ENCODE measurements at regions of chr1 and their contacts with region 1.

Region 1: DNA sequence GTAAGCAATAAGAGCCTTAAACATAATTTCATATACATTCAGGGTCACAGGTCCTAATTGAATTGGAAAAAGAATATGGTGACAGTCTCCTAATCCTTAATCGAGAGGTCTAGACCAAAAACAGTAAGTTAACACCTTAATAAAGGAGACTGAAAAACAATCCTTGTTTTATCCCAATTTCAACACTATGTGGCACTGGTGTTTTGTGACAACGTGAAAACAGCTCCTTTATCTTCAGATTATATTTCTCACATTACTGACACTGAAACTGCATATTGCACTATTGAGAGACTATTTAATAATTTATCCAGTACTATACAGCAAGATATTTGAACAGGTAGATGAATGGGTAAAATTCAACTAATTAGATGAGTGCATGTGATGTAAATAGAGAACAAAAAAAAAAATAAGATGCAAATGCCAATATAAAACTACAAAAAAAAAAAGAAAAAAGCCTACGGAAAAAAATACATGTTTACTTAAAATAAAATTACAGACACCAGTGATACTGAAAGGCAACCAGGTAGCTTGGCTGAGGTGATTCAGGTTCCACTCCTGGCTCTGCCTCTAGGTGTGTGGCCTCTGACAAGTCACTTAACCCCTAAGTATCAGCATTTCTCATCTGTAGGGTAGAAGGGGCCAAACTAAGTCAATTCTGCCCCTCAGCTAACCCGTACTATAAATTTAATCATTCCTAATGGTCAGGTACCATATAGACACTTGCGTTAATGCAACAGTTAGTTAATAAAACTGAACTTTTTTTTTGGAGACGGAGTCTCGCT is 33.9 kb downstream of the TP53BP2 start:
- H3K4me3 Mint-ChIP-seq: no peak overlapping the region
- H3K27ac Mint-ChIP-seq: no peak overlapping the region
- H3K4me1 Mint-ChIP-seq: peaks cover 17% of the 10 kb centered on the region
- H3K27me3 Mint-ChIP-seq: no peaks in the 10 kb centered on the region

Region 2: GRCh38 chr1:223845810-223846682 is 34.2 kb after region 1 on chr1 and contains the start of gene TP53BP2:
- intact Hi-C with region 1: loop called (anchors 5 kb)
- H3K4me3 Mint-ChIP-seq: peak within 1 kb of the TSS; percentile 89
- H3K27ac Mint-ChIP-seq: peak within 1 kb of the TSS; percentile 100
- H3K4me1 Mint-ChIP-seq: peaks cover 34% of the 10 kb centered on the region
- H3K27me3 Mint-ChIP-seq: no peaks in the 10 kb centered on the region

Region 3: DNA sequence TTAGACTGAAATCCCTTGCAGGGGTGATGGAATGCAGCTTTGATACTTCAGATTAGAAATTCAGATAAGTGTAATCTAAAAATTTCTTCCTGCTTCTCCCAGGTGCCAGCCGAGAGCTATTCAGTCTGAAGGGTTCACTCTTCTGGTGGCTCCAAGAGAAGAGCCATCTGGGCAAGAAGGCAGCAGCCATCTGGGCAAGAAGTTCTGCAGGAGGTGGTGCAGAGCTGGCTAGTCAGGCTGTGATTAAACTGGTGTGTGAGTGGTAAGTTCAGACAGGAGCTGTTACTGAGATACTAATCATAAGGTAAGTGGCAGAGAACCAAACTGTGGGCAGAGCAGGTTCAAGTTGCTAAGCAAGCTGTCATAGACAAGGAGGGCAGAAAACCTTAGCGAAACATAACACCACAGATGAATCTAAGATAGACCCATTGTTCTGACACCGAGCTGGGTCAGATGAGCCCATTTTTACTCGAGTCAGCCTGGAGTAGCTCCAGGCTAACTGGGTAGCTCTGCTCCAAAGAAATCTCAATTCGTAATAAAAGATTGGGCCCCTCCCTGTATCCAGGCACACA is 48.3 kb after region 1 on chr1:
- intact Hi-C with region 1: no loop called
- H3K4me3 Mint-ChIP-seq: no peak overlapping the region
- H3K27ac Mint-ChIP-seq: no peak overlapping the region
- H3K4me1 Mint-ChIP-seq: no peaks in the 10 kb centered on the region
- H3K27me3 Mint-ChIP-seq: peaks cover 5% of the 10 kb centered on the region

Region 4: DNA sequence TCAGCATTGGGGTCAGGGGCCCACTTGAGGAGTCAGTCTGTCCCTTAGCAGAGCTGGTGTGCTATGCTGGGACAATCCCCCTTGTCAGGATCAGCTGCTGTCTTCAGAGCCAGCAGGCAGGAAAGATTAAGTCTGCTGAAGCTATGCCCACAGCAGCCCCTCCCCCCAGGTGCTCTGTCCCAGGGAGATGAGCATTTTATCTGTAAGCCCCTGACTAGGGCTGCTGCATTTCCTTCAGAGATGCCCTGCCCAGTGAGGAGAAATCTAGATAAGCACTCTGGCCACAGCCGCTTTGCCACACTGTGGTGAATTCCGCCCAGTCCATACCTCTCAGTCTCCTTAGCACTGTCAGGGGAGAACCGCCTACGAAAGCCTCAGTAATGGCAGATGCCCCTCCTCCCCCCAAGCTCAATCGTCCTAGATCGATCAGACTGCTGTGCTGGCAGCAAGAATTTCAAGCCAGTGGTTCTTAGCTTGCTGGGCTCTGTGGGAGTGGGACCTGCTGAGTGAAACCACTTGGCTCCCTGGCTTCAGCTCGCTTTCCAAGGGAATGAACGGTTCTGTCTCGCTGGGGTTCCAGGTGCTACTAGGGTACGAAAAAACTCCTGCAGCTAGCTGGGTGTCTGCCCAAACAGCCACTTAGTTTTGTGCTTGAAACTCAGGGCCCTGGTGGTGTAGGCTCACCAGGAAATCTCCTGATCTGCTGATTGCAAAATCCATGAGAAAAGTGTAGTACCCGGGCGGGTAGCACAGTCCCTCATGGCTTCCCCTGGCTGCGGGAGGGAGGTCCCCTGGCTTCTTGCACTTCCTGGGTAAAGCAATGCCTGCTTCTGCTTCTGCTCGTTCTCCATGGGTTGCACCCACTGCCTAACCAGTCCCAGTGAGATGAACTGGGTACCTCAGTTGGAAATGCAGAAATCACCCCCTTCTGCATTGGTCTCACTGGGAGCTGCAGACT is 59.1 kb after region 1 on chr1:
- intact Hi-C with region 1: no loop called
- H3K4me3 Mint-ChIP-seq: peak overlapping the region; percentile 50
- H3K27ac Mint-ChIP-seq: peak overlapping the region; percentile 82
- H3K4me1 Mint-ChIP-seq: peaks cover 13% of the 10 kb centered on the region
- H3K27me3 Mint-ChIP-seq: peaks cover 3% of the 10 kb centered on the region

Region 5: DNA sequence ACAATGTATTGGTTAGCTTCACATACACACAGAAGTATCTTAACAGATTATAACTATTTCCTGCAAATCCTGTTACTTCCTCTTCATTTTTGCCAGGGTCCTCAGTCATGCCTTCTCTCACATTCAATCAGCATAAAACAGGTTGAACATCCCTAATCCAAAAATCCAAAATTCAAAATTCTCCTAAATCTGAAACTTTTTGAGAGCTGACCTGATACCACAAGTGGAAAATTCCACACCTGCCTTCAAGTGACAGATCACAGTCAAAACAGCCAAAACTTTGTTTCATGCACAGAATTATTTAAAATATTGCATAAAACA is 239.2 kb after region 1 on chr1:
- intact Hi-C with region 1: loop called (anchors 2 kb)
- H3K4me3 Mint-ChIP-seq: no peak overlapping the region
- H3K27ac Mint-ChIP-seq: no peak overlapping the region
- H3K4me1 Mint-ChIP-seq: no peaks in the 10 kb centered on the region
- H3K27me3 Mint-ChIP-seq: no peaks in the 10 kb centered on the region

Region 6: GRCh38 chr1:224329842-224330753 is 518.3 kb after region 1 on chr1 and contains the start of gene NVL:
- intact Hi-C with region 1: loop called (anchors 10 kb)
- H3K4me3 Mint-ChIP-seq: peak within 1 kb of the TSS; percentile 91
- H3K27ac Mint-ChIP-seq: peak within 1 kb of the TSS; percentile 97
- H3K4me1 Mint-ChIP-seq: peaks cover 38% of the 10 kb centered on the region
- H3K27me3 Mint-ChIP-seq: no peaks in the 10 kb centered on the region